ENCODE measurements at regions of chr9 and their contacts with region 1.

Region 1: DNA sequence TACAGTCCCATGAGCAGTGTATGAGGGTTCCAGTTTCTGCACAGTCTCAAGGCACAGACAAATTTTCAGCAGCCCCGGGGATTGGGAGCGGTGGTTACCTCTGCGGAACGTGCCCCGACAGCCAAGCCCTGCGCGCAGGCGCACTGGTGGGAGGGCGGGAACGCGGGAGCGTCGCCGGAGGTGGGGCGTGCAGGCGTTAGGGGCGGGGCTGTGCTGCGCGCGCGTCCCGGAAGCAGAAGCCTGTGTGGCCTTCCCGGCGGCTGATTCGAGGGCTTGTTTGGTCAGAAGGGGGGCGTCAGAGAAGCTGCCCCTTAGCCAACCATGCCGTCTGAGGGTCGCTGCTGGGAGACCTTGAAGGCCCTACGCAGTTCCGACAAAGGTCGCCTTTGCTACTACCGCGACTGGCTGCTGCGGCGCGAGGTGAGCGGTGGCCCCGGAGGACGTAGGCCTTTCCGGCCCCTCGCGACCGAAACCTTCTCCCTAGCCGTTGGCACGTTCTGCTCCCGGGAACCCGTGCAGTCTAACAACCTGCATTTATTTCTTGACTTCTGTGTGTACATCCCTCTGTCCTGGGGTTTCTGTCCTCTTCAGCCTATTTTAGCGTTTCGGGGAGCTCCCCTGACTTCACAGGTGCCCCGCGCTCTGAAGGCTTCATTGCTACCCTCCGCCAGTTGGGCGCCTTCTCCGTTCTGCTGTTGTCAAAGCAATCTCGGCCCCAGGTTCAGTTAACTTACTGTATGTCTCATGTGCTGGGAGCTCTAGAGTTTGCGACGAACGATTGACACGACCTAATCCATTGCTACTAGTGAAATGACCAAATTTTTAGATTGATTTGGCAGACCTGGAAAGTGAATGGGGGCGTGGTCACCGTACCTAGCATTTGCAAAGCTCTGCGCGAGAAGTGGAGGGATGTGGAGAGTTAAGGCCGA is at the start of gene GLE1:
- DNase-seq: peak; percentile 97 to 99
- ATAC-seq: peak; percentile 98
- H3K4me3 ChIP-seq: peak within 1 kb of the TSS; percentile 65 to 88
- H3K27ac ChIP-seq: peak within 1 kb of the TSS in 1 of 2 donors; percentile 66
- H3K4me1 ChIP-seq: peaks cover 0 to 4% of the 10 kb centered on the region in 2 donors
- H3K27me3 ChIP-seq: no peaks in the 10 kb centered on the region
- total RNA-seq, gene GLE1: 13.5 to 17.3 TPM

Region 2: GRCh38 chr9:128455849-128456612 is 48.7 kb before region 1 on chr9 and contains the start of gene ODF2:
- intact Hi-C with region 1: loop called in 1 of 2 experiments (anchors 5 kb)
- DNase-seq: peak; percentile 98 to 100
- ATAC-seq: peak; percentile 97
- H3K4me3 ChIP-seq: peak within 1 kb of the TSS; percentile 57 to 70
- H3K27ac ChIP-seq: peak within 1 kb of the TSS; percentile 26 to 32
- H3K4me1 ChIP-seq: no peaks in the 10 kb centered on the region
- H3K27me3 ChIP-seq: no peaks in the 10 kb centered on the region
- total RNA-seq, gene ODF2: 25.1 to 28.9 TPM

Region 3: DNA sequence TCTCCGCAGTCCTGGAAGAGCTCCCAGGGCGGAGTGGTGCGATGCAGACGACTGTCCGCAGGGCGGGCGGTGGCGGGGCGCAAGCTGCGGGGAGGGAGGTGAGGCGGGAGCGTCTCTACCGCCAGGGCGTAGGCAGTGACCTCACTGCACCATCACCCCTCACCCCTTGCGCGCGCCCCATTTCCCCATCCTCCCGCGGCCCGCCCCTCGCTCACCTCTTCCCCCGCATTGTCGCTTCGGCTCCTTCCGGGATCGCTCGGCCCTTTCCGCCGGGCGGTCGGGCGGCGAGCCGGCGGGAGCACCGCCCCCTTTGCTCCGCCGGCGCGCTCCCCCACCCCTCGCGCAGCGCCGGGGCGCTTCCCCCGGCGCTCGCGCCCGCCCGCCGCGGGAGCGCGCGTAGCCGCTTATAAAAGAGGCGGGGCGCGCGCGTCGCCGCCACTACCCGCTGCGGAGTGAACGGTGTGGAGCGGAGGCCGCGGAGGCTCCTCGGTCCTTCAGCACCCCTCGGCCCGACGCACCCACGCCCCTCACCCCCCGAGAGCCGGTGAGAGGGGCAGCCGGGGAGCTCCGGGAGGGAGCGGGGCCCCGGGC is 47.5 kb after region 1 on chr9 and contains the start of gene SPTAN1:
- intact Hi-C with region 1: loop called in 1 of 2 experiments (anchors 2 kb)
- DNase-seq: peak; percentile 95 to 97
- ATAC-seq: peak; percentile 95
- H3K4me3 ChIP-seq: peak within 1 kb of the TSS; percentile 82 to 86
- H3K27ac ChIP-seq: peak within 1 kb of the TSS; percentile 69 to 87
- H3K4me1 ChIP-seq: peaks cover 1 to 4% of the 10 kb centered on the region in 2 donors
- H3K27me3 ChIP-seq: no peaks in the 10 kb centered on the region
- total RNA-seq, gene SPTAN1: 384 to 504 TPM

Region 4: GRCh38 chr9:128684279-128685021 is 179.7 kb after region 1 on chr9:
- intact Hi-C with region 1: no loop called
- DNase-seq: peak; percentile 86 to 88
- ATAC-seq: peak; percentile 64
- H3K4me3 ChIP-seq: peak overlapping the region in 1 of 2 donors; percentile 40
- H3K27ac ChIP-seq: no peak overlapping the region
- H3K4me1 ChIP-seq: no peaks in the 10 kb centered on the region
- H3K27me3 ChIP-seq: no peaks in the 10 kb centered on the region

Measured in aorta (tissue), 5 donors.